ENCODE measurements at regions of chrX and their contacts with region 1.

Region 1: DNA sequence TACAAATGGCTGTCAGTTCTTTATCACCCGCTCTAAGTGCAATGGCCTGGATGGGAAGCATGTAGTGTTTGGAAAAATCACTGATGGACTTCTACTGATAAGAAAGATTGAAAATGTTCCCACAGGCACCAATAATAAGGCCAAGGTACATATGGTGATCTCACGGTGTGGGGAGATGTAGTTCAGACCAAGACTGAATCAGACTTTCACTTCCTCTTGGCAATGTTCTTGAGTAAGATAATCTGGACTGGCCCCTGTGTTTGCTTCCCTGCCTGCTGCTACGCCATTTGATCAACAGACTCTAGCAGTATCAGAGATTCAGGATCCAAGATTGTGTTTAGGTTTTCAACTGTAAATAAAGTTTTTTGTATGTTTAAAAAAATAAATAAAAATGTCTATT is 682.2 kb upstream of the AMOT start:
- DNase-seq: peak; percentile 38
- ATAC-seq: peak; percentile 100
- H3K4me3 ChIP-seq: no peak overlapping the region
- H3K27ac ChIP-seq: 0 out of 2 replicates have a peak overlapping the region, but pooled peaks have one; percentile 9
- H3K4me1 ChIP-seq: no peaks in the 10 kb centered on the region
- H3K27me3 ChIP-seq: no peaks in the 10 kb centered on the region
- CTCF ChIP-seq: no peak
- EP300 ChIP-seq: peak in 1 of 2 experiments; percentile 79; a peak in 2 of 4 replicates
- POLR2A ChIP-seq: no peak
- RAD21 ChIP-seq: no peak

Region 2: DNA sequence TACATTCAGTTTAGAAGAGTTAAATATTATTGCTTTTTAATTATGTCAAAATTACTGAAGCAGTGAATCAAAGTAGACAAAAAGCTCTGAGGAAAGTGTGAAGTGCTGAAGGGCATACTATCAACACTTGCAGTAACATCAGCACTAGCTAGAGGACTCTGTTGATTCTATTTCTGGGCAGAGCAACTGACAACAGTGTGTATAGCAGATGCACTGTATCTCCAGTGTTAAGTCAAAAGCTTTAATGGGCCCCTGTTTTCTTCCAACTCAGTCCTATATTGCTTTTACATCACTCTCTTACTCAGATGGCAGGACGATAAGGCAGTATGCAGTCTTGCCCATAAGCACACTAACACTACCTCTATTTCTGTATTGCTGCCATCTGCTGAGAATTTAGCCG is 247.0 kb before region 1 on chrX:
- CTCF ChIA-PET with region 1: no interaction called
- POLR2A ChIA-PET with region 1: no interaction called
- RAD21 ChIA-PET with region 1: no interaction called
- SMC1A ChIA-PET with region 1: no interaction called
- in situ Hi-C with region 1: no loop called
- intact Hi-C with region 1: no loop called
- DNase-seq: no peak
- ATAC-seq: no peak
- H3K4me3 ChIP-seq: no peak overlapping the region
- H3K27ac ChIP-seq: no peak overlapping the region
- H3K4me1 ChIP-seq: no peaks in the 10 kb centered on the region
- H3K27me3 ChIP-seq: no peaks in the 10 kb centered on the region
- CTCF ChIP-seq: no peak
- EP300 ChIP-seq: no peak
- POLR2A ChIP-seq: no peak
- RAD21 ChIP-seq: no peak

Region 3: GRCh38 chrX:113473418-113473817 is 49.4 kb before region 1 on chrX:
- CTCF ChIA-PET with region 1: no interaction called
- POLR2A ChIA-PET with region 1: no interaction called
- RAD21 ChIA-PET with region 1: no interaction called
- SMC1A ChIA-PET with region 1: no interaction called
- in situ Hi-C with region 1: no loop called
- intact Hi-C with region 1: loop called (anchors 1 kb)
- DNase-seq: no peak
- ATAC-seq: peak; percentile 82
- H3K4me3 ChIP-seq: no peak overlapping the region
- H3K27ac ChIP-seq: no peak overlapping the region
- H3K4me1 ChIP-seq: no peaks in the 10 kb centered on the region
- H3K27me3 ChIP-seq: no peaks in the 10 kb centered on the region
- CTCF ChIP-seq: no peak
- EP300 ChIP-seq: no peak
- POLR2A ChIP-seq: no peak
- RAD21 ChIP-seq: no peak

Region 4: GRCh38 chrX:113802837-113803236 is 280.0 kb after region 1 on chrX:
- CTCF ChIA-PET with region 1: no interaction called
- POLR2A ChIA-PET with region 1: no interaction called
- RAD21 ChIA-PET with region 1: no interaction called
- SMC1A ChIA-PET with region 1: no interaction called
- in situ Hi-C with region 1: no loop called
- intact Hi-C with region 1: no loop called
- DNase-seq: no peak
- ATAC-seq: no peak
- H3K4me3 ChIP-seq: no peak overlapping the region
- H3K27ac ChIP-seq: no peak overlapping the region
- H3K4me1 ChIP-seq: no peaks in the 10 kb centered on the region
- H3K27me3 ChIP-seq: no peaks in the 10 kb centered on the region
- CTCF ChIP-seq: no peak
- EP300 ChIP-seq: no peak
- POLR2A ChIP-seq: no peak
- RAD21 ChIP-seq: no peak

Measured in GM12878 (cell line).